HEK293 (cell line): ENCODE measurements at regions of chr1 and their contacts with region 1.

Region 1: DNA sequence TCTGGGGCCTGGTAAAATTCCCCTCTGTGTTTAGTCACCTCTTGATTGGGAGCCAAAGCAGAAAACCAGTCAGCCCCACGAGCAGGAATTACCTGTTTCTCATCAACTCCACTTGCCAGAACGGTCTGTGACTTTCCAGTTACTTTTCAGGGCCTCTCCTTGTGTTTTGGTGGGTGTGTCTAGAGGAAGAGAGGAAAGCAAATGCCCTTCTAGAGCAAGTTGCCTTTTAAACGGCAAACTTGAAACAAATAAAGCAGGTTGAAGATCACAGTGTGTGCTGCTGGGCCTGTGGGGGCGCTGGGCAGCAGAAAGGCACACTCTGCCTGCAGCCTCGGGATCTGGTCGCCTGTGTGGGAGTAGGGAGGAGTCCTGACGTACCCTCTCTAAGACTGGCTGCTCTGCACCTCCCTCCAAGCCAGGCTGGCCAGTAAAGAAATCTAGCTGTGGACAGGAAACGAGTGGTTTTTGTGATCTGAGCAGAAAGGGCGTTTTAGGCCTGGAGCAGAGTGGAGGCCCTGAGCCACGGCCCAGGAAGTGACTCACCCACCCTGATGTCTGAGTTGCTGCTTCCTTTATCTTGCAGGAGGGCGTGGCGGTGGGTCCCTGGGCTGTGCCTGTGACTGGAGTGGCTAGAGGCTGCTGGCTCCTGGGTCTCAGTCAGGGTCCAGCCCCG is 11.1 kb upstream of the S100A11 start:
- H3K4me3 ChIP-seq: peak overlapping the region; percentile 17
- H3K27ac ChIP-seq: peak overlapping the region; percentile 80
- H3K4me1 ChIP-seq: peaks cover 8% of the 10 kb centered on the region
- CTCF ChIP-seq: peak; percentile 89

Region 2: GRCh38 chr1:152034646-152035405 is 13.0 kb before region 1 on chr1:
- CTCF ChIA-PET with region 1: interaction called, 44 read pairs
- POLR2A ChIA-PET with region 1: interaction called, 68 read pairs
- H3K4me3 ChIP-seq: peak overlapping the region; percentile 70
- H3K27ac ChIP-seq: peak overlapping the region; percentile 78
- H3K4me1 ChIP-seq: no peaks in the 10 kb centered on the region; the same call in 1 of the 2 replicates
- CTCF ChIP-seq: peak; percentile 43

Region 3: DNA sequence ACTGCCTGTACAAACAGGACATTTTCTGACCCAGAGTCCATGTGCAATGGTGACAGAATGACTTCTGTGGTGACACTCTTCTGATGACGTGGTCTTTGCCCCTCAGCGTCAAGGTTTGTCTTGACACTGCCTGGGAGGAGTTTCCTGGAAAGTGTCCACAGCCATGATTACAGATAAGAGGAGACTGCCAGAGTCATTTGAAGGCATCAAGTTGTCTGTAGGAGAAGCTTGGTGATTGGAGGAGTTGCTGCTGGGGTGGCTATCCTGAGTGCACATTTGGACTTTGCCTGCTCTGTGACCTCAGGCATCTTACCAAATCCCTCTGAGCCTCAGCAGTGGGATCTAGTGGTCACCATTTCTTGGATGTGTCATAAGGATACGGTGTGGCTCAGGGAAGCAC is 23.3 kb after region 1 on chr1:
- CTCF ChIA-PET with region 1: interaction called, 10 read pairs
- POLR2A ChIA-PET with region 1: no interaction called
- H3K4me3 ChIP-seq: no peak overlapping the region
- H3K27ac ChIP-seq: no peak overlapping the region
- H3K4me1 ChIP-seq: no peaks in the 10 kb centered on the region
- CTCF ChIP-seq: no peak

Region 4: DNA sequence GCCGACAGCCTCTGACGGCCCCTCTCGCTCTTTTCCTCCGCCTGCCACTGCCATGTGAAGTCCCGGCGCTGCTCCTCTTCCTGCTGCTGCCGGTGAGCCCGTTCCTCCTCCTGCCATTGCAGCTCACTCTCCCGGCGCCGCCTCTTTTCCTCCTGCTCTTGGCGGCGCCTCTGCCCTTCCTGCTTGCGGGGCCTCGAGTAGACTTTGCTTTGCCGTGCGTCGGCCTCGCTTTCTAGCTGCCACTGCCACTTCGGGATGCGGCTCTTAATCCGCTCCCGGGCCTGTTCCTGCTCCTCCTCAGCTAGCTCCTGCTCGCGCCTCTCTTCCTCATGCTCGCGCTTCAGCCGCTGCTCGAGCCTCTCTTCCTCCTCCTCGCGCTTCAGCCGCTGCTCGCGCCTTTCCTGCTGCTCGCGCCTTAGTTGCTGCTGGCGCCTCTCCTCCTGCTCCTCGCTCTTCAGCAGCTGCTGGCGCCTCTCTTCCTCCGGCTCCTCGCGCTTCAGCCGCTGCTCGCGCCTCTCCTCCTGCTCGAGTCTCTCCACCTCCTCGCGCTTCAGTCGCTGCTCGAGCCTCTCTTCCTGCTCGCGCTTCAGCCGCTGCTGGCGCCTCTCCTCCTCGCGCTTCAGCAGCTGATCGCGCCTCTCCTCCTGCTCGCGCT is 63.1 kb after region 1 on chr1:
- CTCF ChIA-PET with region 1: interaction called, 11 read pairs
- POLR2A ChIA-PET with region 1: interaction called, 5 read pairs
- H3K4me3 ChIP-seq: peak overlapping the region; percentile 39
- H3K27ac ChIP-seq: peak overlapping the region; percentile 17; the same call in 1 of the 2 replicates
- H3K4me1 ChIP-seq: peaks cover 4% of the 10 kb centered on the region; the same call in 1 of the 2 replicates
- CTCF ChIP-seq: peak; percentile 1; the same call in 1 of the 2 replicates

Region 5: DNA sequence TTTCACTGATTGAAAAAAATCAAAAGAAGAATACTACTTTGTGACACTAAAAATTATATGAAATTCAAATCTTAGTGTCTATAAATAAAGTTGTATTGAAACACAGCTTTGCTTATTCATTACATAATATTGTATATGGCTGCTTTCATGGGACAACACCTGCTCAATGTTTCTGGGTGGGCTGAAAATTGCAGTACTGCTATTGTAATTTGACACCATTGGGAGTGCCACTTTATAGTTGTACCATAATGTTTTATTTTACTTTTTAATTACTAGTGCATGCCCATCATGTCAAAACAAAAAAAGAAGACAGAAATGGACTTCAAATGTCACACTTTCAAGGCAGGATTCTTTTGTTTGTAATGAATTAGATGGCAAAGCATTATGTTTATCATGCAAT is 127.7 kb after region 1 on chr1:
- CTCF ChIA-PET with region 1: interaction called, 223 read pairs
- POLR2A ChIA-PET with region 1: no interaction called
- H3K4me3 ChIP-seq: no peak overlapping the region
- H3K27ac ChIP-seq: no peak overlapping the region
- H3K4me1 ChIP-seq: no peaks in the 10 kb centered on the region
- CTCF ChIP-seq: no peak